Posterior cingulate gyrus (tissue), 11 donors: ENCODE measurements at regions of chr13 and their contacts with region 1.

Region 1: DNA sequence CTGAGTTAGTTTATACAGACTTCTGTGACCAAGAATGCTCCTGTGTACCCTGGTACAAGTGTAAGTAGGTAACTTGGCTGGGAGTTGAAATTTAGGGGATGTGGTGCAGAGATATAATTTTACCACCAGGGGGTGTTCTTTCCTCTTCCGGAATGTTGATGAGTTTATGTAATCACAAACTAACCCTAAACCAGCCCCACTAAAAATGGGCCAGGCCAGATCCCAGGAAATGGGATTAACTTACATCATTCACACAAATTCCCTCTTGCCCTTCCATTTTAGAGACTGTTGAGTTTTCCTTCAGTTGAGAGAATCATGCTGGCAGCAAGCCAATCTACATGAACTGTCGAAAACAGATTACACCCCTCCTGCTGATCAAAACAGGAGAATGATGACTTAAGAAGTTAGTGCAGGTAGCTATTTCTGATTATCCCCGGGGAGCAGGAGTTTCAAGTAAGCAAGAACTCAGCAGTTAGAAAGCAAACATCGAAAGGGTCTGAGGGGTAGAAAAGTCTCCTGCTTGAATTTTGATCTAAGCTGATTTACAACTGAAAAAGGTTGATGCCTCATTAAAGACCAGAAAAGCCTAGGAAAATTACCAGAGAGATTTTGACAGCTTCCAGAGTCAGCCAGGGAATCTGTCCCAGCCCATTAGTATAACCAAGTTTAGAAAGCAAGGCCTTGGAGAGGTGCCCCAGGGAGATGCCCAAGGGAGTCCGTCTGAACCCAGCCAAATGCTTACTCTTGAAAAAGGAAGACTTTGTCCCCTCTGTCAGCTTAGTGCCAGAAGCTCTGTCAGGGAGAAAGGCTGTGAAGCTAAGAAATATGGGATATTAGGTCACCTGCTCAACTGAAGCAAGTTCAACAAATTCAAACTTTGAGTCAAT is 32.3 kb upstream of the MED4 start:
- DNase-seq: peak in 4 of 10 donors; percentile 5 to 23 (median 12)

Region 2: DNA sequence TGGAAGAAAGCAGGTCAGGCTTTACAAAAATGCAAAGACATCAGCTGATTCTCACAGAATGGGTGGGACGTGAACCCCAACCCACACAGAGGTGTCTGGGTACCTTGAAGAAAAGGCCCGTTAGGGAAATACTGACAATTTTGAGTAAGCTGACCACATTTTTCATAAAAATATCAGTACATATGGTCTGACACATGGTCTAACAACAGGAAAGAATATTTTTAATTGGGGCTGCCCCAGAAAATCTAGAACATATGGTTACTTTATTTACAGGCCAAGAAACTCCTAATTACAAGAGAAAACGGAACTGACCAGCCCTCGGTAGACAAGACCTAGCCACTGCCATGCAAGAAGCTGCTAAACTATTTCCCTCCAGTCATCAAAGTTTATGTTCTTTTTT is 57.1 kb after region 1 on chr13:
- intact Hi-C with region 1: no loop called
- DNase-seq: no peak

Region 3: GRCh38 chr13:48303359-48304142 is 176.4 kb after region 1 on chr13 and contains the start of gene RB1:
- intact Hi-C with region 1: loop called (anchors 10 kb)
- DNase-seq: peak; percentile 78 to 98 (median 85)